ENCODE measurements at regions of chr6 and their contacts with region 1.

Region 1: GRCh38 chr6:17469006-17469832 is 75.8 kb downstream of the CAP2 start:
- DNase-seq: no peak
- H3K4me3 ChIP-seq: no peak overlapping the region
- H3K27ac ChIP-seq: peak overlapping the region; percentile 73 to 87 (median 84)
- H3K4me1 ChIP-seq: peaks cover 0 to 69% (median 51%) of the 10 kb centered on the region in 4 donors
- H3K27me3 ChIP-seq: no peaks in the 10 kb centered on the region
- CTCF ChIP-seq: peak; percentile 52 to 72 (median 66)
- EP300 ChIP-seq: no peak
- POLR2A ChIP-seq: no peak

Region 2: DNA sequence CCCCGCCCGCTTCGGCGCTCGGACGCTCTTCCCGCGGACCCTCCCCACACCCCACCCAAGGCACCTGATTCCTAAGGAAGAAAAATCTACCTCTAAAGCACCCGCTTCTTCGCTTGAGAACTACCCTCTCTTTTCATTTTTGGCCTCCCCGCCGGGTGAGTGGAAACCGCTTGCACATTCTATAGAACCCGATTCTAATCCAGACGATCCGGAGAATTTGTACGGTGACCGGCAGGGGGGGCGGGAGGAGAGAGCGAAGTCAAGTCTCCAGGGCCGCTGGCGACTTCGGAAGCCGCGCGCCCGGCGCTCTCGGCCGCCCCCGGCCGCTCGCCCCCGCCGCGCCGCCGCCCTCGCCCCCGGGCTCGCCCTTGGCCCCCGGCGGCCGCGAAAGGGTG is 188.1 kb before region 1 on chr6 and contains the start of gene RBM24:
- intact Hi-C with region 1: loop called (anchors 2 kb)
- DNase-seq: peak; percentile 88
- H3K4me3 ChIP-seq: peak within 1 kb of the TSS; percentile 80 to 93 (median 89)
- H3K27ac ChIP-seq: peak within 1 kb of the TSS; percentile 92 to 95 (median 94)
- H3K4me1 ChIP-seq: peaks cover 0 to 77% (median 37%) of the 10 kb centered on the region in 4 donors
- H3K27me3 ChIP-seq: no peaks in the 10 kb centered on the region
- CTCF ChIP-seq: peak in 3 of 4 experiments; percentile 20 to 26 (median 25)
- EP300 ChIP-seq: no peak
- POLR2A ChIP-seq: no peak
- total RNA-seq, gene RBM24: 8.3 to 34.1 (median 15.1) TPM

Region 3: GRCh38 chr6:17392978-17393891 is 76.0 kb before region 1 on chr6 and contains the start of gene CAP2:
- intact Hi-C with region 1: loop called (anchors 5 kb)
- DNase-seq: peak; percentile 93
- H3K4me3 ChIP-seq: peak within 1 kb of the TSS; percentile 78 to 96 (median 88)
- H3K27ac ChIP-seq: peak within 1 kb of the TSS; percentile 91 to 97 (median 94)
- H3K4me1 ChIP-seq: peaks cover 0 to 20% (median 13%) of the 10 kb centered on the region in 4 donors
- H3K27me3 ChIP-seq: no peaks in the 10 kb centered on the region
- CTCF ChIP-seq: no peak
- EP300 ChIP-seq: no peak
- POLR2A ChIP-seq: peak; percentile 35 to 44
- total RNA-seq, gene CAP2: 48.3 to 67.1 (median 55.6) TPM

Region 4: GRCh38 chr6:17505767-17506280 is 36.6 kb after region 1 on chr6:
- intact Hi-C with region 1: loop called (anchors 2 kb)
- DNase-seq: no peak
- H3K4me3 ChIP-seq: no peak overlapping the region
- H3K27ac ChIP-seq: peak overlapping the region in 3 of 4 donors; percentile 46 to 78 (median 73)
- H3K4me1 ChIP-seq: peaks cover 0 to 46% (median 35%) of the 10 kb centered on the region in 4 donors
- H3K27me3 ChIP-seq: no peaks in the 10 kb centered on the region
- CTCF ChIP-seq: no peak
- EP300 ChIP-seq: no peak
- POLR2A ChIP-seq: no peak

Region 5: DNA sequence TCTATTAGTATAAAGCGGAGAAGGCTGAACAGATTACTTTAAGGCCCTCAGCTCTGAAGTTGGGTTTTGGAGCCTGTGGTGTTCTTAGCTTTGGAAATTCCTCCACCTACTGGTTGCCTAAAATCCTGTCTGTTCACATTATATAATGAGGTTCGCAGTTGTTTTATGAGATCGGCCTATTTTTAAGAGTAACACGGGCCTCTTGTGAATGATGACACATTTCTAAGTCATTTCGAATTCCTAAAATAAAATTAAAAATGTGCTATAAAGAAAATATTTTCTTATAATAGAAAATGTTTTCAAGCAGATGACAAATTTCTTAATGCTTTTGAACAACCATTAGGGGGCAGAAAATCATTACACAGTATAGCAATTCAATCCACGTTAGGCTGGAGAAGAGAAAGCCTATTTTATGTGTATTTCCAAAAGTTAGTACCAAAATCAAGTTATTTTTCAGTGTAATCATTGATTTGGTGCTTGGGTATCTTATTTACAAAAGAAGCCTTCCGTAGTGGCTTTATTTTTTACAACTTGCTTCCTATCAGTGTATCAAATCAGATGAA is 115.1 kb after region 1 on chr6:
- intact Hi-C with region 1: loop called (anchors 1 kb)
- DNase-seq: peak; percentile 79
- H3K4me3 ChIP-seq: peak overlapping the region in 2 of 4 donors; percentile 1 to 15
- H3K27ac ChIP-seq: peak overlapping the region; percentile 74 to 92 (median 80)
- H3K4me1 ChIP-seq: peaks cover 0 to 18% (median 11%) of the 10 kb centered on the region in 4 donors
- H3K27me3 ChIP-seq: no peaks in the 10 kb centered on the region
- CTCF ChIP-seq: peak; percentile 85 to 92 (median 90)
- EP300 ChIP-seq: no peak
- POLR2A ChIP-seq: no peak

Region 6: GRCh38 chr6:17706580-17707370 is 237.6 kb after region 1 on chr6 and contains the start of gene NUP153:
- intact Hi-C with region 1: loop called (anchors 10 kb)
- DNase-seq: peak; percentile 99
- H3K4me3 ChIP-seq: peak within 1 kb of the TSS; percentile 89 to 98 (median 89)
- H3K27ac ChIP-seq: peak within 1 kb of the TSS; percentile 99 to 100 (median 99)
- H3K4me1 ChIP-seq: peaks cover 0 to 38% (median 33%) of the 10 kb centered on the region in 4 donors
- H3K27me3 ChIP-seq: no peaks in the 10 kb centered on the region
- CTCF ChIP-seq: no peak
- EP300 ChIP-seq: peak in 2 of 4 donors; percentile 72 to 90
- POLR2A ChIP-seq: peak; percentile 84 to 92
- total RNA-seq, gene NUP153: 30.0 to 31.4 (median 30.6) TPM